B cell (primary cell): ENCODE measurements at regions of chr19 and their contacts with region 1.

Region 1: DNA sequence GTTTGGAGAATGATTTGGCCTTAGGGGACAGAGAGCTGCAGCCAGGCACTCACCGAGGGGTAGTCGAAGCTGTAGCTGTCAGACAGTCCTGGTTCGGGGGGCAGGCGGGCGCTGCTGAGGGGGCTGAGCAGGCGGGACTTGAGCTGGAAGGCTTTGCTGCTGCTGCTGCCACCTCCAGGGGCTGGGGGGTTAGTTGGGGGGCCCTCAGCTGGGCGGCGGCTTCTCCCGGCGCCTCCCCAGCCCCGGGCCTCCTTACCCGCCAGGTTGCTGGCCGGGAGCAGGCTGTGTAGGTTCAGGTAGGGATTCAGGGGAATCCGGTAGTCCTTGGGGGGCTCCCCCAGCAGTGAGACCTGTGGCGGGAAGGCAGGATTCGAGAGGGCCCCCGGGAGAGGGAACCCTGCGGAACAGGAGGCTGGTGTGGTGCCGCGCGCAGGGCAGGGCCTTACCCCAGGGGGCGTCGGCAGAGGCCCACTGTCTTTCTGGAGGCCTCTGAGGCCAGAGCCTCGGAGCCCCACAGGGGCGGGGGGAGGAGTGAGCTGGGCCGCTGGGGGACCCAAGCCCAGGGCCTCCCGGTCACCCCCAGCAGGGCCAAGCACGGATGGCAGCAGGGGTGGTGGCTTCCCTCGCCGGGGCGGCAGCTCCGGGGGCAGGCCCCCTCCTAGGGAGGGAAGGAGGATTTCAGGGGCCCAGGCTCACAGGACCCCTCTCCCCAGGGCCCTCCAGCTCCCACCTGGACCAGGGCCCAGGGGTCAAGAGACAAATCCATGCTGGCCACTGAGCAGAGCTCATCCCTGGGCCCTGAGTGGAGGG is 5.0 kb upstream of the FDX2 start:
- DNase-seq: no peak
- ATAC-seq: no peak
- H3K4me3 ChIP-seq: no peak overlapping the region
- H3K4me3 Mint-ChIP-seq: no peak overlapping the region
- H3K27ac ChIP-seq: no peak overlapping the region
- H3K27ac Mint-ChIP-seq: no peak overlapping the region
- H3K4me1 ChIP-seq: peaks cover 6 to 13% of the 10 kb centered on the region in 2 donors
- H3K4me1 Mint-ChIP-seq: peaks cover 3% of the 10 kb centered on the region
- H3K27me3 ChIP-seq: no peaks in the 10 kb centered on the region
- H3K27me3 Mint-ChIP-seq: no peaks in the 10 kb centered on the region
- CTCF ChIP-seq: no peak

Region 2: GRCh38 chr19:10173257-10173926 is 147.4 kb before region 1 on chr19:
- CTCF ChIA-PET with region 1: no interaction called
- POLR2A ChIA-PET with region 1: no interaction called
- intact Hi-C with region 1: no loop called
- DNase-seq: no peak
- ATAC-seq: no peak
- H3K4me3 ChIP-seq: no peak overlapping the region
- H3K4me3 Mint-ChIP-seq: no peak overlapping the region
- H3K27ac ChIP-seq: no peak overlapping the region
- H3K27ac Mint-ChIP-seq: no peak overlapping the region
- H3K4me1 ChIP-seq: no peaks in the 10 kb centered on the region
- H3K4me1 Mint-ChIP-seq: peaks cover 1% of the 10 kb centered on the region
- H3K27me3 ChIP-seq: no peaks in the 10 kb centered on the region
- H3K27me3 Mint-ChIP-seq: no peaks in the 10 kb centered on the region
- CTCF ChIP-seq: no peak

Region 3: GRCh38 chr19:11708457-11708856 is 1387.7 kb after region 1 on chr19:
- CTCF ChIA-PET with region 1: no interaction called
- POLR2A ChIA-PET with region 1: interaction called, 12 read pairs
- intact Hi-C with region 1: no loop called
- DNase-seq: no peak
- ATAC-seq: no peak
- H3K4me3 ChIP-seq: no peak overlapping the region
- H3K4me3 Mint-ChIP-seq: no peak overlapping the region
- H3K27ac ChIP-seq: no peak overlapping the region
- H3K27ac Mint-ChIP-seq: no peak overlapping the region
- H3K4me1 ChIP-seq: no peaks in the 10 kb centered on the region
- H3K4me1 Mint-ChIP-seq: no peaks in the 10 kb centered on the region
- H3K27me3 ChIP-seq: no peaks in the 10 kb centered on the region
- H3K27me3 Mint-ChIP-seq: peaks cover 11% of the 10 kb centered on the region
- CTCF ChIP-seq: no peak